ENCODE measurements at regions of chr13 and their contacts with region 1.

Region 1: DNA sequence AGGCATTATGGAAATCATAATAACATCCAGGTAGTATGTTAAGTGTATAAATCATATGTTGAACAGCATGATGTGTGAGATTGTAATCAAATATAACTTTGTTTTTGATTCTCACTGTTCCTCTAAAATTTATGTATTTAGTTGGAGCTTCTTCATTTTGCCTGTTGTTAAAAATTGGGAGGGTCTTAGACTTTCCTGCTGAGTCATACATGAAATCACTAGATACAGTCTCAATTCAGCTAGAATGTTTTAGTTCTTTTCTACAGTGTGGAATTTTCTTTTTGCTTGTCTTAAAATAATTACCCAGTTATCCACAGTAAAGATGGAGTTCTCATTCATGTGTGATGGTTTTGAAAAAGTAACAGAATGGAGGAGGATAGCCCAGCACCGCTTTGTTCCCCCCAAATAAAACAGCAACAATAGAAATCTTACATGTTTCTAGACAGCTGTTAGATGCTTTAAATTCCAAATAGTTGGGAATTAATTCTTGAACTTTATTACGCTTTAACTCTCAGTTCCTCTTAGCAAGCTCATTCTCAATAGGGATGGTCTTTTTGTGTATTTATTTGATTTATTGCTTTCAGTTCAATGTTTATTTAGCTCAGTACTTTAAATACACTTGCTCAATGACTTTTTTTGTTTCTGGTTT is 109.5 kb downstream of the PDS5B start:
- DNase-seq: no peak
- ATAC-seq: no peak
- H3K4me3 ChIP-seq: no peak overlapping the region
- H3K27ac ChIP-seq: no peak overlapping the region
- H3K4me1 ChIP-seq: no peaks in the 10 kb centered on the region
- H3K27me3 ChIP-seq: no peaks in the 10 kb centered on the region
- CTCF ChIP-seq: no peak
- EP300 ChIP-seq: no peak
- POLR2A ChIP-seq: no peak
- RAD21 ChIP-seq: no peak

Region 2: GRCh38 chr13:32669030-32669646 is 26.6 kb before region 1 on chr13:
- CTCF ChIA-PET with region 1: interaction called, 18 read pairs
- POLR2A ChIA-PET with region 1: no interaction called
- RAD21 ChIA-PET with region 1: no interaction called
- SMC1A ChIA-PET with region 1: interaction called, 4 read pairs
- in situ Hi-C with region 1: no loop called
- intact Hi-C with region 1: no loop called
- DNase-seq: no peak
- ATAC-seq: peak; percentile 78
- H3K4me3 ChIP-seq: no peak overlapping the region
- H3K27ac ChIP-seq: no peak overlapping the region
- H3K4me1 ChIP-seq: no peaks in the 10 kb centered on the region
- H3K27me3 ChIP-seq: no peaks in the 10 kb centered on the region
- CTCF ChIP-seq: peak; percentile 57 to 65 (median 58); a peak in 5 of 6 replicates
- EP300 ChIP-seq: no peak
- POLR2A ChIP-seq: no peak
- RAD21 ChIP-seq: peak; percentile 68

Region 3: GRCh38 chr13:32682740-32683139 is 13.0 kb before region 1 on chr13:
- CTCF ChIA-PET with region 1: interaction called, 3 read pairs
- POLR2A ChIA-PET with region 1: interaction called, 3 read pairs
- RAD21 ChIA-PET with region 1: no interaction called
- SMC1A ChIA-PET with region 1: interaction called, 11 read pairs
- in situ Hi-C with region 1: no loop called
- intact Hi-C with region 1: no loop called
- DNase-seq: no peak
- ATAC-seq: no peak
- H3K4me3 ChIP-seq: no peak overlapping the region
- H3K27ac ChIP-seq: no peak overlapping the region
- H3K4me1 ChIP-seq: no peaks in the 10 kb centered on the region
- H3K27me3 ChIP-seq: no peaks in the 10 kb centered on the region
- CTCF ChIP-seq: no peak
- EP300 ChIP-seq: no peak
- POLR2A ChIP-seq: no peak
- RAD21 ChIP-seq: no peak

Region 4: GRCh38 chr13:33040090-33040489 is 344.4 kb after region 1 on chr13:
- CTCF ChIA-PET with region 1: no interaction called
- POLR2A ChIA-PET with region 1: no interaction called
- RAD21 ChIA-PET with region 1: no interaction called
- SMC1A ChIA-PET with region 1: no interaction called
- in situ Hi-C with region 1: no loop called
- intact Hi-C with region 1: no loop called
- DNase-seq: no peak
- ATAC-seq: no peak
- H3K4me3 ChIP-seq: no peak overlapping the region
- H3K27ac ChIP-seq: no peak overlapping the region
- H3K4me1 ChIP-seq: no peaks in the 10 kb centered on the region
- H3K27me3 ChIP-seq: no peaks in the 10 kb centered on the region
- CTCF ChIP-seq: no peak
- EP300 ChIP-seq: no peak
- POLR2A ChIP-seq: no peak
- RAD21 ChIP-seq: no peak